ENCODE measurements at regions of chr5 and their contacts with region 1.

Region 1: GRCh38 chr5:172984243-172984953 is 827 bp downstream of the ATP6V0E1 start:
- DNase-seq: peak; percentile 51 to 90 (median 72)
- ATAC-seq: peak; percentile 84
- H3K4me3 ChIP-seq: peak overlapping the region; percentile 98
- H3K4me3 Mint-ChIP-seq: peak overlapping the region; percentile 92
- H3K27ac ChIP-seq: peak overlapping the region; percentile 91 to 96
- H3K27ac Mint-ChIP-seq: peak overlapping the region; percentile 96
- H3K4me1 ChIP-seq: peaks cover 37% of the 10 kb centered on the region
- H3K4me1 Mint-ChIP-seq: peaks cover 57% of the 10 kb centered on the region
- H3K27me3 ChIP-seq: no peaks in the 10 kb centered on the region
- H3K27me3 Mint-ChIP-seq: no peaks in the 10 kb centered on the region
- CTCF ChIP-seq: peak; percentile 63

Region 2: DNA sequence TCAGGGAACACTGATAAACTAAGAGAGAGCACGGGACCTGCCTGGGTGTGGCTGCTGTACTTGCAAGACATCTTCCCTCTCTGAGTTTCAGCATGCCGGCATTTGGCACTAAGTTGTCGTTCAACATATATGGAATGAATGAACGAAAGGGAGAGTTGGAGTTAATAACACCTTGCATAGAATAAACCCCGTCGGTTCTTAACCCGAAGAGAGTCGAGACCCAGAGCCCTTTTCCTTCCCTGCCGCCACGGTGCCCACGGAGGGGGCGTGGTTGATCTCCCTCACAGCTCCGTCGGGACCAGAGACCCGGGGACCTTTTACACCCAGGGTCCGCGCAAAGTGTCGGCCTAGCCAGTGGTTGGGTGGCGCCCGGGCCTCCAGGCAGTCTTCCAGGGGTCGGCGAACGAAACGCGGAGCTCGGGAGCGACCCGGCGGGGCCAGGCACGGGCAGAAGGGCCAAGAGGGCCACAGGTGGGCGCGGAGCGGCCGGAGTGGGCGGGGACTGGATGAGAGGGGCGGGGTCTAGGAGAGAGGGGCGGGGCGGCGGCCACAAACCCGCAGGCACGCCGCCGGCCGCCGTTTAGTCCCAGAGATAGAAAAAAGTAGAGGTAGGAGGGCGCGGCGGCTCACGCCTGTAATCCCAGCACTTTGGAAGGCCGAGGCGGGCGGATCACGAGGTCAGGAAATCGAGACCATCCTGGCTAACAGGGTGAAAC is 25.9 kb before region 1 on chr5:
- CTCF ChIA-PET with region 1: interaction called, 16 read pairs
- POLR2A ChIA-PET with region 1: interaction called, 29 read pairs
- intact Hi-C with region 1: loop called in 1 of 2 experiments (anchors 1 kb)
- DNase-seq: peak; percentile 35 to 83 (median 56)
- ATAC-seq: peak; percentile 49
- H3K4me3 ChIP-seq: peak overlapping the region; percentile 93
- H3K4me3 Mint-ChIP-seq: peak overlapping the region; percentile 97
- H3K27ac ChIP-seq: peak overlapping the region; percentile 59 to 76
- H3K27ac Mint-ChIP-seq: peak overlapping the region; percentile 96
- H3K4me1 ChIP-seq: peaks cover 21% of the 10 kb centered on the region
- H3K4me1 Mint-ChIP-seq: peaks cover 44% of the 10 kb centered on the region
- H3K27me3 ChIP-seq: no peaks in the 10 kb centered on the region
- H3K27me3 Mint-ChIP-seq: no peaks in the 10 kb centered on the region
- CTCF ChIP-seq: no peak

Region 3: DNA sequence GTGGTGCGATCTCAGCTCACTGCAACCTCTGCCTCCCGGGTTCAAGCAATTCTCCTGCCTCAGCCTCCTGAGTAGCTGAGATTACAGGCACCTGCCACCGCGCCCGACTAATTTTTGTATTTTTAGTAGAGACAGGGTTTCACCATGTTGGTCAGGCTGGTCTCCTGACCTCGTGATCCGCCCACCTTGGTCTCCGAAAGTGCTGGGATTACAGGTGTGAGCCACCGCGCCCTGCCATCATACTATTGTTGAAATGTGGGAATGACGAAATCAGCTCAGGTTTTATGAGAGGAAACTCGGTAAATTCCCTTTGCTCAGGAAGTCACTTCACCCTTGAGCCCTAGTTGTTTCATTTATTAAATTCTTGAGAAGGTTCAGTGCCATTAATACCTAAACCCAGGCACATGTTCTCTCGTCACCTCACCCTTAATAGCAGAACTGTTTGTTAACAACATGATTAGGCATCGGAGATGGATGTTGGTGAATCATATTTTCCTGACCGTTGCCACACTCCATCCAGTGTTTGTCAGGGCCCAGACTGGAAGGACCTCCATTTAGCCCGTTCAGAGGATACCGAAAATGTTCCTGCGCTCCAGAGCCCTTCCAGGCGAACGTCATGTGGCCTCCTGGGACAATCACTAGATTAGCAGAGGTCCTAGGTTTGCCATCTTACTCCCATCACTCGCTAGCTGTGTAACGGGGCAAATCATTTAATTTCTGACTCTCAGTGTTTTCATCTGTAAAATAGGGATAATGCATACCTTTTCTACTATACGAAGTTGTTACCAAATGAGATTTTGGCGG is 51.7 kb after region 1 on chr5:
- CTCF ChIA-PET with region 1: interaction called, 3 read pairs
- POLR2A ChIA-PET with region 1: interaction called, 32 read pairs
- intact Hi-C with region 1: no loop called
- DNase-seq: peak in 3 of 14 experiments; percentile 27 to 48 (median 36)
- ATAC-seq: no peak
- H3K4me3 ChIP-seq: peak overlapping the region; percentile 45
- H3K4me3 Mint-ChIP-seq: peak overlapping the region; percentile 86
- H3K27ac ChIP-seq: peak overlapping the region; percentile 78 to 80
- H3K27ac Mint-ChIP-seq: peak overlapping the region; percentile 93
- H3K4me1 ChIP-seq: peaks cover 35% of the 10 kb centered on the region
- H3K4me1 Mint-ChIP-seq: peaks cover 66% of the 10 kb centered on the region
- H3K27me3 ChIP-seq: no peaks in the 10 kb centered on the region
- H3K27me3 Mint-ChIP-seq: no peaks in the 10 kb centered on the region
- CTCF ChIP-seq: no peak

Region 4: DNA sequence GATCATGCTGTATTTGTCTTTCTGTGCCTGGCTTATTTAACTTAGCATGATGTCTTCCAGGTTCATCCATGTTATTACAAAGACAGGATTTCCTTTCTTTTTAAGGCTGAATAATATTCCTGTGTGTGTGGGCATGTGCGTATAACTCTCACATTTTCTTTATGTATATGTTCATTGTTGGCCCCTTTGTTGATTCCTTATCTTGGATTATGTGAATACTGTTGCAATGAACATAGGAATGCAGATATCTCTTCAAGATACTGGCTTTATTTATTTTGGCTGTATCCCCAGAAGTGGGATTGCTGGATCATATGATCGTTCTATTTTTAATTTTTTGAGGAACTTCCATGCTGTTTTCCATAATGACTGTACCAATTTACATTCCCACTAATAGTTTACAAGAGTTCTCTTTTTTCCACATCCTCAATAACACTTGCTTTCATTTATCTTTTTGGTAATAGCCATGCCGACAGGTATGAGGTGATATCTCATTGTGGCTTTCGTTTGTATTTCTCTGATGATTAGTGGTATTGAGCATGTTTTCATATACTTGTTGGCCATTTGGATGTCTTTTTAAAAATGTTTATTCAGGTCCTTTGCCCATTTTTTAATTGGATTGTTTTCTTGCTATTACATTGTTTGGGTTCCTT is 109.7 kb after region 1 on chr5:
- CTCF ChIA-PET with region 1: no interaction called
- POLR2A ChIA-PET with region 1: no interaction called
- intact Hi-C with region 1: no loop called
- DNase-seq: no peak
- ATAC-seq: no peak
- H3K4me3 ChIP-seq: no peak overlapping the region
- H3K4me3 Mint-ChIP-seq: no peak overlapping the region
- H3K27ac ChIP-seq: no peak overlapping the region
- H3K27ac Mint-ChIP-seq: peak overlapping the region; percentile 74
- H3K4me1 ChIP-seq: peaks cover 8% of the 10 kb centered on the region
- H3K4me1 Mint-ChIP-seq: peaks cover 65% of the 10 kb centered on the region
- H3K27me3 ChIP-seq: no peaks in the 10 kb centered on the region
- H3K27me3 Mint-ChIP-seq: no peaks in the 10 kb centered on the region
- CTCF ChIP-seq: no peak

Region 5: DNA sequence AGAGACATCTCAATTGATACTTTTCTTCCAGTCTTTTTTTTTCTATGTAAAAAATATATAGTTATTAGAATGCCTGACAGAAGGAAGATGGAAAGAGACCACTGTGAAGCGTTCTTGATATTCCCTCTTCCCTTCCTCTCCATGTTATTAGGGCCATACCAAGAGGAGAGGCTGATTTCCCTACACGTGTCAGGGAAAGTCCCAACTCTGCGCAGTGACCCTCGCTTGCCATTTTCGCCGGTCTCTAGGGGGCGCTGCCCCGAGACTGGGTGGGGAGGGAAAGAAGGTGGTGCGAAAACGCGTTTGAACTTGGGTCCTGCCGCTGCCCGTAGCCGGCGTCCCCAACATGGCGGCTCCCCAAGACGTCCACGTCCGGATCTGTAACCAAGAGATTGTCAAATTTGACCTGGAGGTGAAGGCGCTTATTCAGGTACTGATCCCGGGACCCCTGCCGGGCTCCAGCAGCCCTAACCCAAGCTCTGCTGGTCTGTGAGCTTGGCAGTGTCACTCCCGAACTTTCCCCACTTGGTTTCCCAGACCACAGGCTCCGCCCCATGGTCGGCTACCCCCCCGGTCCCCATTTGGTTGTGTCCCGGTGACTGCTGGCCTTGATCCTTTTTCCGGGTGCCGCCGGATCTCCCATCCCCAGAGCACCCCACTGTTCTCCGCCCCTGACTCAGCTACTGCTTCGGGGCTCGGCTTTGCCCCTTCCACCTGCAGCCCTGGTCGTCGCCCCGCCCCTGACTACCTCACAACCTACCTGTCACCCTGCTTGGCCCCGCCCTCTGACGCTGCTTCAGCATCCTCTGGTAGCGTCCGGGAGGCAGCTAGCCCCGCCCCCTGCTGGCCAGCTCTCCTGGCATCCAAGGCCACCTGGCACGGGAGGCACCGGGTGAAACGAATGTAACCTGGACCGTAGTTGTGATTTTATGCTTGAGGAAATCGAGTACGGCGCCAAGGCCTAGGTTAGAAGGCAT is 160.1 kb after region 1 on chr5 and contains the start of gene BNIP1:
- CTCF ChIA-PET with region 1: interaction called, 17 read pairs
- POLR2A ChIA-PET with region 1: interaction called, 56 read pairs
- intact Hi-C with region 1: loop called (anchors 1 kb)
- DNase-seq: peak; percentile 90 to 99 (median 97)
- ATAC-seq: peak; percentile 93
- H3K4me3 ChIP-seq: peak within 1 kb of the TSS; percentile 90
- H3K4me3 Mint-ChIP-seq: peak within 1 kb of the TSS; percentile 98
- H3K27ac ChIP-seq: peak within 1 kb of the TSS; percentile 97 to 99
- H3K27ac Mint-ChIP-seq: peak within 1 kb of the TSS; percentile 100
- H3K4me1 ChIP-seq: peaks cover 8% of the 10 kb centered on the region
- H3K4me1 Mint-ChIP-seq: peaks cover 13% of the 10 kb centered on the region
- H3K27me3 ChIP-seq: no peaks in the 10 kb centered on the region
- H3K27me3 Mint-ChIP-seq: no peaks in the 10 kb centered on the region
- CTCF ChIP-seq: peak; percentile 90
- total RNA-seq, gene BNIP1: 22.5 to 24.4 TPM

Region 6: DNA sequence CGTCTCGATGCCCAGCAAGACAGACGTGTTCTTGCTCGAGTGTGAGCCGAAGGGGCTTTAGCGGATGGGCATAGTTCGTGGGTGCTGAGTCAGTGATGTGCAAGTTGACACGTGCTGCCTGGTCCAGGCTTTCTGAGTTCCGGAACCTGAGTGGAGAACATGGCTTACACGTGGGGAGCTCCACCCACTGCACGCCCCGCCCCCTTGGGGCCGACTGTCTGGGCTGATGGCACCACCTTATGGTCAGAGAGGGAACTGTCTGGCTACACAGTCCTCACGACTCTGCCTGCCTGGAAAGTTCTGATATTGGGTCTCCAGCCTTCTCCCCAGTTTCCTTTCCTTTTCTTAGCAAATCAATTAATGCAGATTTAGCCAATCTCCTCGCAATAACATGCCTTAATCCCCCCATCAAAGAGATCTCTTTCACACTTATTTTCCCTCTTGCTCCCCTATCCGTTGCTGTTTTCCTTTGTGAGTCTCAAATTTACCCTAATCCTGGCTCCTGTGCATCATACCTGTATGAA is 347.6 kb after region 1 on chr5:
- CTCF ChIA-PET with region 1: no interaction called
- POLR2A ChIA-PET with region 1: no interaction called
- intact Hi-C with region 1: loop called (anchors 2 to 5 kb)
- DNase-seq: peak; percentile 36 to 81 (median 54)
- ATAC-seq: peak; percentile 98
- H3K4me3 ChIP-seq: no peak overlapping the region
- H3K4me3 Mint-ChIP-seq: no peak overlapping the region
- H3K27ac ChIP-seq: no peak overlapping the region
- H3K27ac Mint-ChIP-seq: no peak overlapping the region
- H3K4me1 ChIP-seq: peaks cover 23% of the 10 kb centered on the region
- H3K4me1 Mint-ChIP-seq: peaks cover 20% of the 10 kb centered on the region
- H3K27me3 ChIP-seq: peaks cover 40 to 45% of the 10 kb centered on the region in 2 experiments
- H3K27me3 Mint-ChIP-seq: peaks cover 76% of the 10 kb centered on the region
- CTCF ChIP-seq: peak; percentile 26

Region 7: GRCh38 chr5:173615884-173616576 is 631.6 kb after region 1 on chr5:
- CTCF ChIA-PET with region 1: no interaction called
- POLR2A ChIA-PET with region 1: no interaction called
- intact Hi-C with region 1: loop called in 1 of 2 experiments (anchors 10 kb)
- DNase-seq: peak; percentile 45 to 89 (median 62)
- ATAC-seq: peak; percentile 55
- H3K4me3 ChIP-seq: peak overlapping the region; percentile 69
- H3K4me3 Mint-ChIP-seq: peak overlapping the region; percentile 95
- H3K27ac ChIP-seq: peak overlapping the region; percentile 81 to 96
- H3K27ac Mint-ChIP-seq: peak overlapping the region; percentile 81
- H3K4me1 ChIP-seq: peaks cover 26% of the 10 kb centered on the region
- H3K4me1 Mint-ChIP-seq: peaks cover 51% of the 10 kb centered on the region
- H3K27me3 ChIP-seq: no peaks in the 10 kb centered on the region
- H3K27me3 Mint-ChIP-seq: no peaks in the 10 kb centered on the region
- CTCF ChIP-seq: peak; percentile 82

Measured in CD4-positive, alpha-beta T cell (primary cell).